K562 (cell line): ENCODE measurements at regions of chr11 and their contacts with region 1.

Region 1: GRCh38 chr11:86193297-86194095 is 51.1 kb upstream of the EED start:
- DNase-seq: peak; percentile 88 to 97 (median 90)
- ATAC-seq: peak; percentile 94
- H3K4me3 ChIP-seq: no peak overlapping the region
- H3K27ac ChIP-seq: peak overlapping the region; percentile 87
- H3K4me1 ChIP-seq: peaks cover 14 to 59% of the 10 kb centered on the region in 2 experiments
- H3K27me3 ChIP-seq: no peaks in the 10 kb centered on the region
- CTCF ChIP-seq: peak; percentile 80 to 92 (median 89)
- EP300 ChIP-seq: peak; percentile 94
- POLR2A ChIP-seq: no peak
- RAD21 ChIP-seq: peak; percentile 90 to 95

Region 2: DNA sequence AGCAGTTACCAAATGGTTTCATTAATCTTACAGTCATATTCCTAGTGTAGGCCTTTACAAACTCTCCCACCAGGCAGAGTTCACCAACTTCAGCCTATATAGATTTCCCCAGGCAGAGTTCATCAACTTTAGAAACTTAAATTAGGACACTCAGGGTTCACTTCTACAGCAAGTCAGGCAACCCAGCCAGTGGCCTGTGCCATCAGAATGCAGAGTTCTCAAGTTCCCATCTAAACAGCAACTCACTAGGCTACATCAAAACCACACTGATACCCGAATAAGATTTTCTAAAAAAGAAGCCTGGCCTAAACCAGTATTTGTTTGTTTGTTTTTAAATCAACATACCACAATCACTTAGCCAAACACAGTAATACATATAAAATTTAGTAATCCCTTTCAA is 158.3 kb before region 1 on chr11:
- CTCF ChIA-PET with region 1: no interaction called
- POLR2A ChIA-PET with region 1: no interaction called
- in situ Hi-C with region 1: no loop called
- intact Hi-C with region 1: no loop called
- DNase-seq: peak in 1 of 4 experiments; percentile 27
- ATAC-seq: peak; percentile 59
- H3K4me3 ChIP-seq: no peak overlapping the region
- H3K27ac ChIP-seq: peak overlapping the region; percentile 49; the same call in 2 of the 3 replicates
- H3K4me1 ChIP-seq: peaks cover 3 to 27% of the 10 kb centered on the region in 2 experiments; a peak in 4 of 5 replicates
- H3K27me3 ChIP-seq: no peaks in the 10 kb centered on the region
- CTCF ChIP-seq: no peak
- EP300 ChIP-seq: no peak
- POLR2A ChIP-seq: no peak
- RAD21 ChIP-seq: no peak

Region 3: GRCh38 chr11:86134580-86135318 is 58.7 kb before region 1 on chr11:
- CTCF ChIA-PET with region 1: no interaction called
- POLR2A ChIA-PET with region 1: no interaction called
- in situ Hi-C with region 1: no loop called
- intact Hi-C with region 1: loop called (anchors 2 kb)
- DNase-seq: peak; percentile 29 to 87 (median 51)
- ATAC-seq: peak; percentile 86
- H3K4me3 ChIP-seq: no peak overlapping the region
- H3K27ac ChIP-seq: peak overlapping the region; percentile 78
- H3K4me1 ChIP-seq: peaks cover 22 to 62% of the 10 kb centered on the region in 2 experiments
- H3K27me3 ChIP-seq: no peaks in the 10 kb centered on the region
- CTCF ChIP-seq: no peak
- EP300 ChIP-seq: peak; percentile 89
- POLR2A ChIP-seq: no peak
- RAD21 ChIP-seq: peak; percentile 16 to 38; a peak in 1 of 4 replicates

Region 4: GRCh38 chr11:86143087-86144030 is 50.1 kb before region 1 on chr11:
- CTCF ChIA-PET with region 1: no interaction called
- POLR2A ChIA-PET with region 1: interaction called, 3 read pairs
- in situ Hi-C with region 1: no loop called
- intact Hi-C with region 1: loop called (anchors 2 kb)
- DNase-seq: peak in 3 of 4 experiments; percentile 40 to 92 (median 81)
- ATAC-seq: peak; percentile 75
- H3K4me3 ChIP-seq: no peak overlapping the region
- H3K27ac ChIP-seq: peak overlapping the region; percentile 81
- H3K4me1 ChIP-seq: peaks cover 27 to 91% of the 10 kb centered on the region in 2 experiments
- H3K27me3 ChIP-seq: no peaks in the 10 kb centered on the region; a peak in 1 of 5 replicates
- CTCF ChIP-seq: no peak
- EP300 ChIP-seq: peak; percentile 99
- POLR2A ChIP-seq: no peak
- RAD21 ChIP-seq: peak; percentile 10 to 30; a peak in 3 of 4 replicates

Region 5: GRCh38 chr11:86151174-86152005 is 42.1 kb before region 1 on chr11:
- CTCF ChIA-PET with region 1: no interaction called
- POLR2A ChIA-PET with region 1: interaction called, 3 read pairs
- in situ Hi-C with region 1: no loop called
- intact Hi-C with region 1: loop called (anchors 1 kb)
- DNase-seq: peak; percentile 76 to 96 (median 86)
- ATAC-seq: peak; percentile 79
- H3K4me3 ChIP-seq: no peak overlapping the region; the same call in 1 of the 2 replicates
- H3K27ac ChIP-seq: peak overlapping the region; percentile 78
- H3K4me1 ChIP-seq: peaks cover 46 to 78% of the 10 kb centered on the region in 2 experiments
- H3K27me3 ChIP-seq: no peaks in the 10 kb centered on the region; a peak in 1 of 5 replicates
- CTCF ChIP-seq: peak in 2 of 3 experiments; percentile 7 to 24; a peak in 2 of 6 replicates
- EP300 ChIP-seq: peak; percentile 98
- POLR2A ChIP-seq: no peak
- RAD21 ChIP-seq: peak; percentile 17 to 56; a peak in 3 of 4 replicates

Region 6: DNA sequence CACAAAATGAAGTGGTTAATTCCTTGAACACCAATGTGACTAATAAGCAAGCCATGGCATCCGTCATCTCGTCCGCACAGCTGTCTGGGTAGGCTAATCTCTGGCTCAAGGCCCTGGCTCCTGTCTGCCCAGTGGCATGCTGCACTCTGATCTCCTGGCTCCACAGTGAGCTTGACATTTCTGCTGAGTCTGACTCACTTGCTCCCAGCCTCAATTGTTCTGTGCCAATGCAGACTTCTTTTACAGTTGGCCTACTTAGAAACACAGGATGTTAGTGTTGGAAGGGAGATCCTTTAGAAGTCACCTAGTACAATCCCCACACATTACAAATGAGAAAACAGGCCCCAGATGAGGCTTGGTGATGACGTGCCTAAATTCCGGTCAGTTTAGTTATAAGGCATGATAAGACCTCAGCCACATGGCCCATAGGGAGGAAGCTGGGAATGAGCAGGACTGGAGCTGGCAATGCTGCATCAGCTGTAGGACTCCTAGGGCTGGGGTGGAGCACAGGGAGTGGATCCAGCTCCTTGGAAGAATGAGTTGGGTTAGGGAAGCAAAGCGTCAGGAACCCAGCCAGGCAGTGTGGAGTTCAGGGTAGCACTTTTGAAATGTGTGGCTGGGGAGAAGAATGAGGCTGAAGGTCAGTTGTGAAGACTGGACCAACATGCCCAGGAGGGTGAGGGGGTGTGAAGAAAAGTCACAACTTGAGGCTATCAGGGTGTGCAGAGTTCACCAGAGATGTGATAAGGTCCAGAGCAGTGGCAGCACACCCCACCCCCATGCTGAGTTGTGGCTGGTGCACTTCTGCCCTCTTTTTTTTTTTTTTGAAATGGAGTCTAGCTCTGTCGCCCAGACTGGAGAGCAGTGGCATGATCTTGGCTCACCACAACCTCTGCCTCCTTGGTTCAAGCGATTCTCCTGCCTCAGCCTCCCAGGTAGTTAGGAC is 19.1 kb before region 1 on chr11:
- CTCF ChIA-PET with region 1: no interaction called
- POLR2A ChIA-PET with region 1: interaction called, 5 read pairs
- in situ Hi-C with region 1: no loop called
- intact Hi-C with region 1: loop called (anchors 1 kb)
- DNase-seq: peak; percentile 76 to 87 (median 78)
- ATAC-seq: peak; percentile 45
- H3K4me3 ChIP-seq: no peak overlapping the region
- H3K27ac ChIP-seq: peak overlapping the region; percentile 81
- H3K4me1 ChIP-seq: peaks cover 54 to 76% of the 10 kb centered on the region in 2 experiments
- H3K27me3 ChIP-seq: no peaks in the 10 kb centered on the region; a peak in 1 of 5 replicates
- CTCF ChIP-seq: no peak
- EP300 ChIP-seq: peak; percentile 90
- POLR2A ChIP-seq: no peak; the same call in 1 of the 2 replicates
- RAD21 ChIP-seq: no peak